Spleen (tissue), 13 donors: ENCODE measurements at regions of chr9 and their contacts with region 1.

Region 1: DNA sequence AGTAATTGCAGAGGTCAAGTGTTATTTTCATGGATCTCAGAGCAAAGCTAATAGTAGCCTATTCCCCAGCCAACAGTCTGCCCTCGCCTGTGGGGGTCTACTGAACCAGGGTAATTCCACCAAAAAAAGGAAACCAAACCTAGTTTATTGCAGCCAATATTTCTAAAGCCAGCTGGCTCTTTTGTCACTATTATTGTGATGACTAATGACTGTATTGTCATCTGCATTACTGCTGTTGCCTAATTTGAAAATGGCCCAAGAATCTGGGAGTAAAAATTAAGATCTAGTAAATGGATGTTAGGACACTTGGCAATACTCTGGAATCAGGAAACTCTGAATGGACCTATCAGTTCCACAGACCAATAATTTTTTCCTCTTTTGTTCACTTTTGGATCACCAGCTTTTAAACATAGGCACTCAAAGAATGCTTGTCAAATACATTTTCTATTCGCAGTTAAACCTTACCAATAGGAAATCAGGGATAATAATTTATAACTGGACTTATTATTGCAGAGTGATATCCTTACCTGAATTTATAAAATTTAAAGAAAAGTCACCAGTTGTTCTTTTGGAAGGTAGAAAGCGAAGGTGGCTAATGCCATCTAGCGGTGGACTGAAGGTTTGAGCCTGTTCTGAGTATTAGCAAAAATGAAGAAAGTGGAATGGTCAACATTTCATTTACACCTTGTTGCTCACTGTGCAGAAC is 69.2 kb downstream of the SYK start:
- DNase-seq: no peak
- H3K4me3 ChIP-seq: no peak overlapping the region
- H3K27ac ChIP-seq: peak overlapping the region in 2 of 8 donors; percentile 16 to 26
- H3K4me1 ChIP-seq: peaks cover 0 to 34% (median 0%) of the 10 kb centered on the region in 6 donors
- H3K27me3 ChIP-seq: no peaks in the 10 kb centered on the region
- CTCF ChIP-seq: peak; percentile 48 to 88 (median 79)
- POLR2A ChIP-seq: no peak

Region 2: GRCh38 chr9:89597711-89598625 is 1272.8 kb before region 1 on chr9:
- intact Hi-C with region 1: loop called (anchors 5 kb)
- DNase-seq: no peak
- H3K4me3 ChIP-seq: no peak overlapping the region
- H3K27ac ChIP-seq: no peak overlapping the region
- H3K4me1 ChIP-seq: peaks cover 0 to 4% (median 1%) of the 10 kb centered on the region in 6 donors
- H3K27me3 ChIP-seq: peaks cover 0 to 10% (median 0%) of the 10 kb centered on the region in 7 donors
- CTCF ChIP-seq: peak; percentile 48 to 89 (median 74)
- POLR2A ChIP-seq: no peak

Region 3: GRCh38 chr9:90142580-90142979 is 728.2 kb before region 1 on chr9:
- intact Hi-C with region 1: loop called (anchors 5 kb)
- DNase-seq: no peak
- H3K4me3 ChIP-seq: no peak overlapping the region
- H3K27ac ChIP-seq: no peak overlapping the region
- H3K4me1 ChIP-seq: peaks cover 0 to 14% (median 0%) of the 10 kb centered on the region in 6 donors
- H3K27me3 ChIP-seq: peaks cover 0 to 22% (median 0%) of the 10 kb centered on the region in 7 donors
- CTCF ChIP-seq: peak in 10 of 11 experiments; percentile 26 to 67 (median 58)
- POLR2A ChIP-seq: no peak

Region 4: DNA sequence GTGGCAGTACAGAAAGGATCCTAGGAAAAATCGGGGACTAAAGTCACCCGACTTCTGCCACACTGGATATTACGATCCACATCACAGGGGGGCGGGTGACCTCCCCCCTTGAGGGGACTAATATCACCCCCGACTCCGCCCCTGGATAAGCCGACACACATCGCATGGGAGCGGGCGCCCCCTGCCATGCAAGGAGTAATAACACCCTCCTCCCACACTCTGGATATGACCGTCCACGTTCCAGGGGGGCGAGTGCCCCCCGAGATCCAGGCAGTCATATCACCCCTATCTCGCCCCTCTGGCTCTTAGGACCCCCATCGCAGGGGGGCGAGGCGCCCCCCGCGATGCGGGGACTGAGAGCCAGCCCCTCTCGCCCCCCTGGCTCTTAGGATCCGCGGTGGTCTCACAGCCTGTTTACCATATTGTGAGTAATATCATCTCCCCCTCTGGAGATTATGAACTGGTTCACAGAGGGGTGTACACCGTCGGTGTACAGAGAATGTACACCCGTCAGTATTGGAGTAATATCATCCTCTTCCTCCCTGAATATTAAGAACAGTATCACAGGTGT is 651.1 kb before region 1 on chr9:
- intact Hi-C with region 1: loop called (anchors 10 kb)
- DNase-seq: no peak
- H3K4me3 ChIP-seq: peak overlapping the region in 1 of 8 donors; percentile 13
- H3K27ac ChIP-seq: no peak overlapping the region
- H3K4me1 ChIP-seq: peaks cover 0 to 8% (median 4%) of the 10 kb centered on the region in 6 donors
- H3K27me3 ChIP-seq: peaks cover 0 to 27% (median 3%) of the 10 kb centered on the region in 7 donors
- CTCF ChIP-seq: peak in 9 of 11 experiments; percentile 30 to 63 (median 55)
- POLR2A ChIP-seq: no peak

Region 5: DNA sequence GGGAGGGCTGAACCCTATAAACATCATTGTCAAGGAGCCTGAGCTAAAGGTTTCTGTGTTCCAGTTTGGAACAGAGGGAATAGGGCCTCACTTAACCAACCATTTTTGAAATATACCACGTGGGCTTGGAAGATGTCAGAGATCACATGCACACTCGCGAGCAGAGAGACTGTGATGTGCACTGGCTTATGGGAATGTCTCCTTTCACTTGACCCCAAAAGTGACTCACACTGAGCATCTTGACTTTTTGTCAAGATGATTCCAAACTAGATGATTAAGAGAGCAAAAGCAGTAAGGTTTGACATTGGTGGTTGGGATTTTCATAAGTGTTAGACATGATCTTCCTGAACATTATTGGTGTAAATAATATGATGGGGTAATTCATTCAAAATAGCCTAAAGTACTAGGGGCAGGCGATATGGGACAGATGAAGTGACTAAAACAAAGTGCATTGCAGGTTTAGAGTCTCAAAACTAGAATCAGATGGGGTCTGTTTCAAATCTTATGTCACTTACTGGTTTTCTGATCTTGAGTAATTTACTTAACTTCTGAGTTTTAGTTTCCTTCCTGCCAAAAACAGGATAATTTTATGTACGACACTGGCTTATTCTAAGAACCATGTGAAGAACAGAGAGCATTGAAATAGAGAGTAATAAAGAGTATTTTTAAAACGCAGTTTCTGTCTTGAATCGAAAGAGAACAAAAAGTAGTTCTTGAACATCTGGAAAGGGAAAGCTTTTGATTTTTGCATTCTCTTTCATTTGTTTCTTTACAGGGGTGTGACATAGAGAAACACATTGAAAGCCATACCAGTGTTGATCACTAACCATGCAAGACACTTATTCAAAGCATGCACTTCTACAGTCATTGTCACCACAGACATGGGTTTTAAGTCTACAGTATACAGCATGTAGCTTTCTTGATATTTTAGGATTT is 611.2 kb before region 1 on chr9:
- intact Hi-C with region 1: no loop called
- DNase-seq: no peak
- H3K4me3 ChIP-seq: no peak overlapping the region
- H3K27ac ChIP-seq: no peak overlapping the region
- H3K4me1 ChIP-seq: no peaks in the 10 kb centered on the region
- H3K27me3 ChIP-seq: peaks cover 0 to 5% (median 0%) of the 10 kb centered on the region in 7 donors
- CTCF ChIP-seq: no peak
- POLR2A ChIP-seq: no peak

Region 6: DNA sequence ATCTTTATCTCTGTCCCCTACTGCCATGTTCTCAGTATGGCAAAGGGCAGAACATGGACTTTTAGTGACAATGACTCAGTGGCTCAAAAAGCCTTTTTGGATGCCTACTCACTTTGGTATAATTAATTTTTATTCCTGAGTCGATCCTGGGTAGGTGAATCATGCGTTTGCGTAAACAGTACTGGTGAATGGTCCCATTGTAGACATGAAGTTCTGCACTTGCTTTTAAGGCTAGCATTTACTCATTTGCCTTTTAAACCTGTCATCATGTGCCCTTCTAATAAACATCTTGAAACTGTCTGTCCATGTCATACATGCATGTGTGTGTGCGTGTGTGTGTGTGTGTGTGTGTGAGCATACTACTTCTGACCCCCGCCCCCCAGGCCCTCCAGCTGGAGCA is 268.0 kb after region 1 on chr9:
- intact Hi-C with region 1: no loop called
- DNase-seq: no peak
- H3K4me3 ChIP-seq: no peak overlapping the region
- H3K27ac ChIP-seq: no peak overlapping the region
- H3K4me1 ChIP-seq: no peaks in the 10 kb centered on the region
- H3K27me3 ChIP-seq: no peaks in the 10 kb centered on the region
- CTCF ChIP-seq: no peak
- POLR2A ChIP-seq: no peak